ENCODE measurements at regions of chr12 and their contacts with region 1.

Region 1: DNA sequence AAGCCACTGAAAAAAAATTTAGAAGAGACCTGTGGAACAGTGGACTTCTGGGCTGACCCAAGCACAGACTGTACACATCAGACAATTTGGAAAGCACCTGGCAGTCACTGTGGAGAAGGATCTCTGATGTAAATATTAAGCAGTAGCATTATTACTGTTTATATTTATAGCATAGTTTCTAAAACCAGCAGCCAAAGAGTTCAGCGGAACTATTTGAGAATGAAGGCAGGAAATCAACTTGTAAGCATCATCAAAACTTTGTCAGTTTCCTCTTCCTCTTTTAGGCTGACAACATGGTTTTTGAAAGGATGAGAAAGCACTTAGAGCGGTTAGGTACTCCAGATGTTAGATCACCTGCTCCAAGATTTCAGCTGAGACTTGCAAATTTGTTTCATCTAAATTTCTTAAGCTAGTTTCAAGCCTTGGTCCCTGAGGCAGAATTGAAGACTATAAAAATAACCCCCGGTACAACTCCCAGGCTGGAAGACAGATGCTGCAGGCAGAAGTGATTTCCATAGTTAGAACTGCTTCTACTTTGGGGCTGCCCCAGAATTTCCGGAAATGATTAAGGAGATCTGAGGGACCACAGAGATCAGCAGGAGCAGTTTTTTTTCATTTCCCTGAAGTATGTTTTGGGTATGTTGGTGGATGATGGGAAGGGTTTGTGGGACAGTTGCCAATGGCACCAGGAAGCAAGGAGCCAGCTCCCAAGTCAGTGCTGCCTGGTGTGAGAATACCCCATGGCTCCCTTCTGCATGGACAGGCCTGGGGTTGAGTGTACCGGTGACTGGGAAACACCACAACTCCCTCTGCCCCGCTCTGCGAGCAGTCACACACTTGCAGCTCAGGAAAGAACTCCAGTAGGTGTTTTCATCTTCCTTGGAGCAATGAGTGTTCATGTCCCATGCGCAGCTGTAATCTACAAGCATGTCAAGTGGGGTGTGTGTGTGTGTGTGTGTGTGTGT is 354.5 kb downstream of the NUAK1 start:
- DNase-seq: no peak
- ATAC-seq: no peak
- H3K4me3 ChIP-seq: no peak overlapping the region
- H3K27ac ChIP-seq: no peak overlapping the region
- H3K4me1 ChIP-seq: no peaks in the 10 kb centered on the region
- H3K27me3 ChIP-seq: no peaks in the 10 kb centered on the region
- CTCF ChIP-seq: no peak
- EP300 ChIP-seq: no peak
- POLR2A ChIP-seq: no peak
- RAD21 ChIP-seq: no peak

Region 2: DNA sequence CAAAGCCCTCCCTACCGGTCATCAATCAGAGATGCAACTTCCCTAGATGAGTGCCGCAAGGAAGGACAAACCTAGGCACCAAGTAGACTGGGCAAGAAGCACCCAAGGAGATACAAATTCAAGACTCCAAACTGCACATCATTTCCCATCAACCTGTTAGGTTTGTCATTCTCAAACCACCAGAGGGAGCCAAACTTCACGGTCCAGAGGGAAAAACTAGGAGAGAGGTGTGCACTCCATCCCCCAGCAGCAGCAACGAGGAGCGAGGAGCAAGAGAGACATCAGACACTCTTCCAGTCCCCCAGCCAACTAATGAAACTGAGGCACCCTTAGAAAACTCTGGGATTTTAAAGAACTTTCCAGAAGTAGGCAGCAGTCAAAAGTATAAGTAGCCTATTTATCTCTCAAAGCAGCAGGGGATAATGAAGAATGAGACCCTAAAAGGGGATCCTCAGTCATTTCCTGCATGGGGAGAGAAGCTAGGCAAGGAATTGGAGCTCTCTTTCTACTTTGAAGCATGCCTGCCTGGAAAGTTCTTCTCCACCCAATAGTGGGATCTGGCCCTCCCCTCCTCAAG is 1906.2 kb before region 1 on chr12:
- CTCF ChIA-PET with region 1: no interaction called
- POLR2A ChIA-PET with region 1: no interaction called
- in situ Hi-C with region 1: loop called (anchors 25 kb)
- intact Hi-C with region 1: no loop called
- DNase-seq: peak; percentile 63 to 79 (median 70)
- ATAC-seq: peak; percentile 95
- H3K4me3 ChIP-seq: no peak overlapping the region
- H3K27ac ChIP-seq: no peak overlapping the region
- H3K4me1 ChIP-seq: no peaks in the 10 kb centered on the region
- H3K27me3 ChIP-seq: peaks cover 9 to 13% of the 10 kb centered on the region in 2 experiments; a peak in 3 of 5 replicates
- CTCF ChIP-seq: peak; percentile 70 to 82 (median 80)
- EP300 ChIP-seq: no peak
- POLR2A ChIP-seq: no peak
- RAD21 ChIP-seq: peak; percentile 70 to 83

Region 3: DNA sequence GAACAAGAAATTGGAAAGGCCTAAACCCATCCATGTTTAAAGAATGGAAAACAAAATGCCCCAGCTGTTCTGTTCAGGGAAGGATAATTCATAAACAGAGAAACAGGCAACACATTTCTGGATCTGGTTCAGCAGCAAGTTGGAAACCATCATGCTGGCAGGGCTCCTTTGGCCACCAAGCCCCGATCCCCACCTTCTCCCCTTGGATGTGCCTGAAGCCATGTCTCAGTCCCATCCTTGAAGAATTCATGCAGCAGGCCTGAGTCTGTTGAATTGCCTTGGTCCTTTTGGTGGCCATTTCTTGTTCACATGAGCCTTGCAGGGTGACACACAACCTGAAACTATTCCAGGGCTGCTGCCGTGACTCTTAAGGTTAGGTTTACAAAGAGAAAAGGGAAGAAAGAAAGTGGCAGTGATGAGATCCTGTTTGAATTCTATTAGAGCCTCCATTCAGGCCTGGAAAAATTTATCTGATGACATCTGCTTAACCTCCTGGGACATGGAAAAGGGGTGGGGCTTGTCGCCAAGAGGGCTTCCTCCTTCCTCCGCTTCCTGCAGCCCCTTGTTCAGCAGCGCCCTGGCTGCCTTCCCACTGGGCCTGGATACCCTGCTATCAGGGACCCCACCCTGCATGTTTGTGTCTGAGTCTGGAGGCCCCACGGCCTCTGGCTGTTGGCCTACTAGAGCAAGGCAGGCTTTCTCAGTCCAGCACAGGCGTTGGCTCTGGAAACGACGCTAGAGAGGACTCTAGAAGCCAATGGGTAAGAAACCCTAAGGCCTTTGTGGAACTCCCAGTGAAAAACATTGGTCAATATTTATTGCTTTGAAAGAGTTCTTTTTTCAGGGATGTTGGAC is 111.9 kb before region 1 on chr12:
- CTCF ChIA-PET with region 1: no interaction called
- POLR2A ChIA-PET with region 1: no interaction called
- in situ Hi-C with region 1: no loop called
- intact Hi-C with region 1: no loop called
- DNase-seq: no peak
- ATAC-seq: no peak
- H3K4me3 ChIP-seq: no peak overlapping the region
- H3K27ac ChIP-seq: no peak overlapping the region
- H3K4me1 ChIP-seq: peaks cover 0 to 3% of the 10 kb centered on the region in 2 experiments; a peak in 1 of 5 replicates
- H3K27me3 ChIP-seq: no peaks in the 10 kb centered on the region
- CTCF ChIP-seq: no peak
- EP300 ChIP-seq: no peak
- POLR2A ChIP-seq: no peak
- RAD21 ChIP-seq: no peak